ENCODE measurements at regions of chr1 and their contacts with region 1.

Region 1: GRCh38 chr1:234610348-234611152 is 572 bp upstream of the IRF2BP2 start:
- DNase-seq: peak; percentile 97
- ATAC-seq: peak; percentile 79 to 85

Region 2: DNA sequence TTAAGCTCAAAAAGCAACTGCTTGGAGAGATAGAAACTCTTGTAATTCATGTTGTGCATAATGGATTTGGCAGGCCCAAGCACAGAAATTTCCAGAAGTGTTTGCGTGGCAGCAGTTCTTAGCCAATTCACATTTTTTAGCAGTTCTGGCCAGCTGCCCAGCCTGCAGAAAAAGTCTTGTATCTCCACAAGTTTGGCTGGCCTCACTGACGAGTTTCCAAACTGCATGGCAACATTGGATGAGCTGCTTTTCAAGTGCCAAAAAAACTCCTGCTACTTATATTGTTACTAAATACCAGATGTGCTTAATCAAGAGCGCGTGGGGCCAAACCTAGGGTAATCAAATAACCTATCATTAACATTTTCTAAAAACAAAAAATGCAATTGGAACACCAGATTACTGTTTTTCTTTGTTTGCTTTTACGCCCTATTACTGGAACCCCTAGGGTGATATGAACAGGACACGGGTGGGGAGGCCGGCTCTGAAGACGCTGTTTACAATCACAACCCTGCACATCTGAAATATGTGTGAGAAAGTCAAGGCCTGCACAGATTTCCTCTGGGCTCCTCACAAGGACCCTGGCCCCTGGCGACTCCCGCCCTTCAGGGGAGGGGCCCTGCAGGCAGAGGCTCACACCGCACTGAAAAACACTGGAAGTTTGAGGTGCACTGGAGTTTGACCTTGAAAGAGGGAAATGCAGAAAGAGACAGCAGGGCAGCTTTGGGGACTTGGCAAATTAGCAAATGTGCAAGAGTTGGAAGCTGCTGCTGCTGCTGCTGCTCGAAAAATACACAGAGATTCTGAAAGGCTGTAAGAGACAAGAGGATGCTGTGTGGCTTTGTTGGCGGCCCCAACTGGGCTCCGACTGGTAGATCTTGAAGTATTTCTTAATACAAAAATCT is 76.3 kb before region 1 on chr1:
- intact Hi-C with region 1: loop called (anchors 5 kb)
- DNase-seq: peak; percentile 96
- ATAC-seq: peak; percentile 24 to 29

Region 3: GRCh38 chr1:234553156-234553863 is 57.2 kb before region 1 on chr1:
- intact Hi-C with region 1: no loop called
- DNase-seq: peak; percentile 67
- ATAC-seq: peak; percentile 88 to 89

Region 4: DNA sequence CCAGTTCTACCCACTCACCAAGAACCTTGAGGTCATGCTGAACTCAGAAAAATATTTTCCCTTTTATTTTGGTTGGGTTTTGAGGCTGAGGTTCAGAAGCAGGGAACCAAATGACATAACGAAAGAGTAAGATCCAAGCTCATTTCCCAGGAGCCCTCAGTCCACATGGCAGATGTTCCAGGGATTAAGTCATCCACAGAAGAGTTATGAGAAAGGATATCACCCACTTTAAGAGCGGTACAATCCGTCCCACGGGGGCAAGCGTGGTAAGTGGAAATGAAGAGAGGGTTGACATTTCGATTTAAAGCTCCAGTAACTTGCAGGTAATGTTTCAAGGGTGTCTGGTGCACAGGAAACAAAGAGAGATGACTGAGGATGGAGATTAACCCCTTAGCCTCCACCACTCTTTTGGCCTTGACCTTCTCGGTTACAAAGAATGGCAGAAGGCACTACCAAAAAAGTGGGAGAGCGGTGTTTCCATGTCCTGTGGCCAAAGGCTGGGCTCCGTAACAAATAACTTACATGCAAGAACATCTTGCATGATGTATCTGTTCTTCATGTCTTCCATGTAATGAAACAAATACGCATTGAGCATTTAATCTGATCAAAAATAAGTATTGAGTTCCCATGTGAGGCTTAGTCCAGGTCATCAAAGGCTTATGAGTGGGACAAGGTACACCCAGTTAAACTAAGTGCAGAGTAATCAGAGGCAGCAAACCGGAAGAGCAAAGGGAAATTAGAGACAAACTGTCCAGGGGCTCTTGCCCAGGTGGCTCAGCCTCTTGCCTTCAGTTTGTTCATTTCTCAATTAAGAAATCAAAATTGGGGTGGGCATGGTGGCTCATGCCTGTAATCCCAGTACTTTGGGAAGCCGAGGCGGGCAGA is 276.7 kb after region 1 on chr1:
- intact Hi-C with region 1: loop called in 1 of 2 experiments (anchors 5 kb)
- DNase-seq: peak; percentile 74
- ATAC-seq: peak; percentile 72 to 77

Region 5: DNA sequence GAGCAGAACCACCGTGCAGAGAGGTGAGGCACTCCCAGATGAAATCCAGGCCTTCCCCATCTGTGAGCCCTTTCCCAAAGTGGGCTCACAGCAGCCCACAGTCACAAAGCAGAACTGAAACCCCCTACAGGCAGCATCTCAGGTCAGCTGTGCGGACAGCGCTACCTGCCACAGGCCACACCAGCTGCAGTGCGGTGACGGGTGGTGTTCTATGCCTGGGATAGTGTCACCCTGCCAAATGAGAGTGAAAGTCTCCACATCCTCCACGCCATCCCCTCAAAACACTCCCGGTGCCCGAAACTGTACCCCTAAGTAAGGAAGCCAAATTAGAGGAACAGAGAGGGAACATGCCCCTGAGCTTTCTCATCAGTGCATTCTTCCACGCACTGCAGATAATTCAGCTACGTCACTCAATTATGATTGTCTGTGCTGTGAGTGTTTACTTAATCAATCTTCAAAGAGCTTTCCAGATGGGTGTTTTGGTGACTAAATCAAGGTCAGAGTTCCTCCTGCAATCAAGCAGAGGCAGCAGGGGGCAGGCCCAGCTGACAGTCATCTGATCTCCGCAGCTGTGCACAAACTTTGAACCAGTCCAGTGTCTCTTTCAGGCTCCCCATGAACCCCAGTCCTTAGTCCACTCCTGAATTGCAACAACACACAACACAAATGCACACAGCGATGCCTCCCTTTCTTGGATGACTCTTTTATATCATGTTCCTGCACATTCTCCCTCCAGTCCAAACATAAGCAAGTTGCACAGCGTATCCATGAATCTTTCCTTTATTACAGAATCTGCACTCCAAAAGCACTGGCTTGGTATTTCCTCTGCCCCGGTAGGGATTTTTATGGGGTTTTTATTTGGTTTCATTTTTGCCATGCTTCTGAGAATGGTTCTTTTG is 368.1 kb after region 1 on chr1:
- intact Hi-C with region 1: loop called in 1 of 2 experiments (anchors 5 kb)
- DNase-seq: peak; percentile 58
- ATAC-seq: peak; percentile 35 to 43

Region 6: GRCh38 chr1:235075188-235075926 is 464.8 kb after region 1 on chr1:
- intact Hi-C with region 1: loop called (anchors 2 to 5 kb)
- DNase-seq: peak; percentile 85
- ATAC-seq: peak; percentile 60 to 74

Region 7: DNA sequence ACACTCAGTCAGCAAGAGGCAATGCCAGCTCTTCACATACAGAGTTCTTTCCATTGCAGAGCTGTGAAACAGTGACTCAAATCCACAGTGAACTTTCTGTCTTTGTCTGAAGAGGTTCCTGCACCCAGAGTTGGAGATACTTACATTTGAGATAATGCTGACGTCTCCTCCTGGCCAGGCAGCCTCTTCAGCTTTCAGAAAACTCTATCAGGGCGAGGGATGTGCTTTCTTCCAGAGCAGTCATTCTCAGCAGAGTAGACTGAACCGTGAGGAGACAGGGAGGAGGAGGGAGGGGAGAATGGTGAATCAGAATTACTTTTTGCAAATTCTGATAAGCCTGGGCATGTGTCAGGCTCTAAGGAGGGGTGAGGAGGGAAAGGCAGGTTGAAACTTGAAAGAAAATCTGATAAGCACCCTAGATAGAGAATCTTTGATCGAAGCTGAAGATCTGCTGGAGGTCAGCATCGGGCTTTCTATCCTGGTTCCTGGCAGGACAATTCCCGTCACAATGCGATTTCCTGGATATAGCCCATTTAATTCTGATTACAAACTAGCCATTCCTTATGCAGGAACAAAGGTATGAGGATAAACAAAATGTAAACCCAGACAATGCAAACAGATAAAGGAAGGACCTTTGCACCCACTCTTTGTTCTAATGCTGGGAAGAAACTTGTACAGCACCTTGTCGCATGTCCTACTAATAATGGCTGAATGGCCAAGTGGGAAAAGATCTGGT is 1473.3 kb after region 1 on chr1:
- intact Hi-C with region 1: no loop called
- DNase-seq: no peak
- ATAC-seq: peak; percentile 44 to 91